ENCODE measurements at regions of chr12 and their contacts with region 1.

Region 1: GRCh38 chr12:110543252-110543959 is 39.7 kb downstream of the PPTC7 start:
- DNase-seq: peak; percentile 98
- H3K4me3 ChIP-seq: no peak overlapping the region
- H3K27ac ChIP-seq: peak overlapping the region; percentile 68
- H3K4me1 ChIP-seq: peaks cover 52% of the 10 kb centered on the region
- H3K27me3 ChIP-seq: no peaks in the 10 kb centered on the region
- CTCF ChIP-seq: no peak

Region 2: DNA sequence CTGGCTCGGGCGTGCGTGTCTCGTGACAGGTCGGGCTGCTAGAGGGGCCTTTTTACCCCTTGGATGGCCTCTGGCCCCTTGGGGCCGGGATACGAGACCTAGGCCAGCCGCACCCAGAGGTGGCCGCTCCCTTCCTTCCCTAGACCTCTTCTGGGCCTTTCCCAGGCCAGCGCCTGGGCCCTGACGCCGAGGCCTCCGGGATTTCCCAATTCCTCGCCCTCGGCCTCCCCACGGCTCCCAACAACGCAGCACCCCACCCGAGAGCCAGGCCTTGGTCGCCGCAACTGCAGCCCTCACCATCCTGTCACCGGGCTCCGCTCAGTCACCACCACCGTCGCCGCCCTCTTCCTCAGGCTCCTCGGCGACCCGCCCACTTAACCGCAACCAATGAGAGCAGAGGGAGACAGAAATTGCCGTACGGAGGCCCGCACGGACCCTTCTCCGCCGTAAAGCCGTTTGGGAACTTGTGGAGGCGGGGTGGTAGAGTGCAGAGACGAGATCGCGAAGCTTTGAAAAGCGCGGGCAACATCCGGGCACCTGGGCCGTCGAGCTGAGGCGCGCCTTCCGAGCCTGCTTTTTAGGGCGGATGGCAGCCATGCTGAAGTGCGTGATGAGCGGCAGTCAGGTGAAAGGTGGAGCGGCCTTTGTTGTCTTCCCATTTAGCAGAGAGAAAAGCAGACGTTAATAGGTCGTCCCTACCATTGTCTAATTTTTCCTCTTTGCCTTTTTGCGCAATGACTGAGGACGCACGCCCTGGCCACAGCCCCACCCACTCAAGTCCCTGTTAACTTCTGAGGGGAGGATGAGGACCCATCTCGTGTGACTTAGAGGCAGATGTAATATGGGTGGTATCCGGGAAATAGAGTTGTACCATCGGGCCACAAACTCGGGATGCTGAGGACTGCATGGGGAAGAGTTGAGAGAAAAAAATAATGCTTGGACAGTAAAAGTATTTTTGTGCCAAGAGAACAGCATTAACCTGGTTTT is 41.4 kb before region 1 on chr12 and contains the starts of genes RAD9B and VPS29:
- CTCF ChIA-PET with region 1: no interaction called
- dilution Hi-C with region 1: no loop called
- in situ Hi-C with region 1: no loop called
- intact Hi-C with region 1: loop called (anchors 5 kb)
- DNase-seq: peak; percentile 99
- H3K4me3 ChIP-seq: peak within 1 kb of the TSS; percentile 84 to 94 (median 92)
- H3K27ac ChIP-seq: peak within 1 kb of the TSS; percentile 96
- H3K4me1 ChIP-seq: peaks cover 17% of the 10 kb centered on the region
- H3K27me3 ChIP-seq: no peaks in the 10 kb centered on the region
- CTCF ChIP-seq: no peak
- total RNA-seq, gene RAD9B: 1.1 to 2.5 TPM
- total RNA-seq, gene VPS29: 56.3 to 130 TPM

Region 3: DNA sequence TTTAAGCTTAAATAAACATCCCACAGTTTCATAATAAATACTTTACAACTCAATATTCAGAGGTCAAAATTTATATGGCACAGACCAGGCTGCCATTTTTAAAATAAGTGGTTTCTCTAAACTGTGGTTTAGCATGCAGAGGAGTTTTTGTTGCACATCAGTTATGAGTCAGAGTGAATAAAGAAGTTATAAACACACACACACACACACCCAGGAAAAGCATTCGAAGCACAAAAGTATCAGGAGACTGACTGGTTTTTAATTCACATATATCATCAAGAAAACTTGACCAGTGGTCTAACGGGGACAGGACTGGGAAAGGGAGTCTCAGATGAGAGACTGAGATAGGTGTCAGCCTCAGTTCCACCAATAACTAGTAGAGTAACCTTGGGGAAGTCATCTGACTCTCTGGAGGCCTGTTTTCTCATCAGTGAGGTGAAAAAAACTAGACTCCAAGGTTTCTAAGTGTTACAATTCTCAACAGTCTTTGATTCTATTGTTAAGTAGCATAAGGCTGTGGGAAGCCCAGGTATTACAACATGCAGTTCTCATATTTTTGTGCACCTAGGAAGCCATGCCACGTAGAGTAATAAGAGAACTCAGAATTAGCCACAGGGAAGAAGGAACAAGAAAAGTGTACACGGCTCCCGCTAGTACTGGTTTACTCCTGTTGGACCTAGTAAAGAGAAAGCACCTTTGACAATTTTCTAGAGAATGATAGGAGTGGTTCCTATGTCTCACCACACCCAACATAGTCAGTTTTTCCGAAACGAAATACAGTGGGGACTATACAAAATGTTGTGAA is 34.5 kb after region 1 on chr12:
- CTCF ChIA-PET with region 1: no interaction called
- dilution Hi-C with region 1: no loop called
- in situ Hi-C with region 1: no loop called
- intact Hi-C with region 1: loop called (anchors 2 kb)
- DNase-seq: peak; percentile 99
- H3K4me3 ChIP-seq: peak overlapping the region; percentile 13 to 41 (median 32)
- H3K27ac ChIP-seq: peak overlapping the region; percentile 100
- H3K4me1 ChIP-seq: peaks cover 45% of the 10 kb centered on the region
- H3K27me3 ChIP-seq: no peaks in the 10 kb centered on the region
- CTCF ChIP-seq: no peak

Measured in mammary epithelial cell (primary cell).